Stomach (tissue), 19 donors: ENCODE measurements at regions of chr3 and their contacts with region 1.

Region 1: DNA sequence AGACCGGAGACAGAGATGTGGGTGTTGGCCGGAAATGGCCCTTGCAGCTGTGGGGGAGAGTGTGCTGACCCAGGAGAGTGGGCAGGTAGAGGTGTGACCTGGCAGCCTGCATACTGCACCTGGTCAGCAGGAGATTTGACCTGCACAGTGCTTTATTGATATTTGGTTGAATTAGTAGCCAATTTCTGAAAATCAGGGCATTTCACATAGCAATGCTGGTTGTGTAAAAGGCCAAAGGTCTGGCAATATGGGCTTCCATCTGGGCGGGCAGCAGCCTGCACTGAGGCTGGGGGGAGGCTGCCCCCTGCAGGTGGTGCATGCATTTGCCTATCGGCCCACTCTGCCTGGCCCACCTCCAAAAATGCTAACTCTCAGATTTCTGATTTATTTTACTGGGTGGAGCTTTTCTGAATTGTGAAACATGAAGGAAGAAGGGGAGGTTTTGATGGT is 9.4 kb upstream of the MGLL start:
- DNase-seq: peak; percentile 58 to 60
- H3K4me3 ChIP-seq: no peak overlapping the region
- H3K27ac ChIP-seq: no peak overlapping the region
- H3K4me1 ChIP-seq: peaks cover 6 to 25% (median 12%) of the 10 kb centered on the region in 4 donors
- H3K27me3 ChIP-seq: no peaks in the 10 kb centered on the region
- CTCF ChIP-seq: peak in 5 of 7 experiments; percentile 34 to 73 (median 67)
- EP300 ChIP-seq: no peak
- POLR2A ChIP-seq: no peak

Region 2: GRCh38 chr3:127574880-127575878 is 256.6 kb before region 1 on chr3:
- intact Hi-C with region 1: loop called (anchors 10 kb)
- DNase-seq: peak; percentile 92 to 96
- H3K4me3 ChIP-seq: peak overlapping the region in 1 of 4 donors; percentile 13
- H3K27ac ChIP-seq: peak overlapping the region in 1 of 5 donors; percentile 24
- H3K4me1 ChIP-seq: peaks cover 6 to 25% (median 13%) of the 10 kb centered on the region in 4 donors
- H3K27me3 ChIP-seq: no peaks in the 10 kb centered on the region
- CTCF ChIP-seq: peak in 5 of 7 experiments; percentile 92 to 99 (median 98)
- EP300 ChIP-seq: no peak
- POLR2A ChIP-seq: no peak

Region 3: GRCh38 chr3:128487813-128488635 is 656.3 kb after region 1 on chr3:
- intact Hi-C with region 1: no loop called
- DNase-seq: peak; percentile 67 to 93
- H3K4me3 ChIP-seq: peak overlapping the region; percentile 49 to 68 (median 58)
- H3K27ac ChIP-seq: peak overlapping the region; percentile 33 to 80 (median 73)
- H3K4me1 ChIP-seq: peaks cover 53 to 88% (median 67%) of the 10 kb centered on the region in 4 donors
- H3K27me3 ChIP-seq: peaks cover 77 to 100% (median 100%) of the 10 kb centered on the region in 3 donors
- CTCF ChIP-seq: no peak
- EP300 ChIP-seq: no peak
- POLR2A ChIP-seq: no peak